Transverse colon (tissue), 4 donors: ENCODE measurements at regions of chr12 and their contacts with region 1.

Region 1: DNA sequence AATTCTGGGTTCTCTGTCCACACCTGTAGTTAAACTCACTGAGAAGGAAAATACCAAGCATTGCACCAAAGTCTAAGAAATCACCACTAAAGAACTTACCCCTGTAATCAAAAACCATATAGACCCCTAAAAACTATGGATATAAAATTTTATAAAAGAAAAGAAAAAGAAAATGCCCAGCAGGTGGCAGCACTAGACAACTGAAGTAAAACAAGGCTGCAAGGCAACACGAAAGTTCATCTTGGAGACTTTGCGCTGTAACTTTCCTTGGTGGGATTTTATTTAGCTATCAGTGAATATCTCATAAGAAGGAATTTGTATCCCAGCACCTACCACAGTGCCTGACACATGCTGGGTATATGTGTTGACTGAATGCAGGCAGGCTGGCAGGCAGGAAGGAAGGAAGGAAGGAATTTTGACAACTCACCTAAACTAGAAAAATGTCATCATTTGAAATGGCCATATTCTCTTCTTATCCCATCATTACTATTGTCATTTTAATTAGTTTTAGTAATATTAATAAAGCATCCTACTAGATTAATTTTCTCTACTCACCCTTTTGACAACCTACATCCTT is 68.2 kb upstream of the ETV6 start:
- DNase-seq: peak; percentile 75
- H3K4me3 ChIP-seq: no peak overlapping the region
- H3K27ac ChIP-seq: peak overlapping the region in 1 of 4 donors; percentile 68
- H3K4me1 ChIP-seq: peaks cover 0 to 16% (median 7%) of the 10 kb centered on the region in 4 donors
- H3K27me3 ChIP-seq: no peaks in the 10 kb centered on the region
- CTCF ChIP-seq: peak; percentile 60 to 86 (median 70)
- EP300 ChIP-seq: no peak
- POLR2A ChIP-seq: no peak

Region 2: GRCh38 chr12:11307143-11307542 is 274.1 kb before region 1 on chr12:
- in situ Hi-C with region 1: no loop called
- intact Hi-C with region 1: no loop called
- DNase-seq: no peak
- H3K4me3 ChIP-seq: no peak overlapping the region
- H3K27ac ChIP-seq: no peak overlapping the region
- H3K4me1 ChIP-seq: no peaks in the 10 kb centered on the region
- H3K27me3 ChIP-seq: no peaks in the 10 kb centered on the region
- CTCF ChIP-seq: no peak
- EP300 ChIP-seq: no peak
- POLR2A ChIP-seq: no peak

Region 3: GRCh38 chr12:11633968-11634367 is 52.7 kb after region 1 on chr12:
- in situ Hi-C with region 1: no loop called
- intact Hi-C with region 1: no loop called
- DNase-seq: no peak
- H3K4me3 ChIP-seq: no peak overlapping the region
- H3K27ac ChIP-seq: no peak overlapping the region
- H3K4me1 ChIP-seq: no peaks in the 10 kb centered on the region
- H3K27me3 ChIP-seq: no peaks in the 10 kb centered on the region
- CTCF ChIP-seq: no peak
- EP300 ChIP-seq: no peak
- POLR2A ChIP-seq: no peak

Region 4: GRCh38 chr12:11648831-11649702 is 67.8 kb after region 1 on chr12 and contains the start of gene ETV6:
- in situ Hi-C with region 1: loop called in 1 of 4 experiments (anchors 10 kb)
- intact Hi-C with region 1: no loop called
- DNase-seq: peak; percentile 81
- H3K4me3 ChIP-seq: peak within 1 kb of the TSS; percentile 77 to 97 (median 84)
- H3K27ac ChIP-seq: peak within 1 kb of the TSS; percentile 96 to 99 (median 98)
- H3K4me1 ChIP-seq: peaks cover 4 to 32% (median 17%) of the 10 kb centered on the region in 4 donors
- H3K27me3 ChIP-seq: no peaks in the 10 kb centered on the region
- CTCF ChIP-seq: no peak
- EP300 ChIP-seq: peak; percentile 89
- POLR2A ChIP-seq: peak; percentile 64
- total RNA-seq, gene ETV6: 19.9 to 47.9 (median 41.0) TPM

Region 5: GRCh38 chr12:12032851-12033588 is 451.8 kb after region 1 on chr12:
- in situ Hi-C with region 1: loop called (anchors 5 to 10 kb)
- intact Hi-C with region 1: loop called (anchors 1 kb)
- DNase-seq: peak; percentile 87
- H3K4me3 ChIP-seq: peak overlapping the region in 3 of 4 donors; percentile 31 to 56 (median 33)
- H3K27ac ChIP-seq: peak overlapping the region; percentile 85 to 86 (median 86)
- H3K4me1 ChIP-seq: peaks cover 0 to 20% (median 13%) of the 10 kb centered on the region in 4 donors
- H3K27me3 ChIP-seq: no peaks in the 10 kb centered on the region
- CTCF ChIP-seq: peak; percentile 78 to 96 (median 82)
- EP300 ChIP-seq: no peak
- POLR2A ChIP-seq: no peak

Region 6: DNA sequence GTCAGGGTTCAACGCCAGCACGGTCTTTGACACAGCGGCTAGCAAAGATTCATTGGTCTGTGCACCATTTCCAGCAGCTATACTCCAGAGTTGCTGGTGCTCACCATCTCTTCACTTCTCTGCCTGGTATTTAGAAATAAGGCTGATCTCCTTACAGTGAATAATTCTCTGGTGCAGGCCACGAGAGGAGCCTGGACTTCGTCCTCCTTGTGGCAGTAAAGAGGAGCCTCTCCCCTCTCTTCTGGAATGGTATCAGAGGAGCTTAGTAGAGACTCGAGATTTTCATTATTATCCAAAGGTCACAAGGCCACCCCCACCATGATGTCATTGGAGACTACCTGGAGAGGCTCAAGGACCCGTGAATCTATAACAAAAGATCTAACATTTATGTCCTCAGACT is 458.6 kb after region 1 on chr12:
- in situ Hi-C with region 1: loop called in 3 of 4 experiments (anchors 5 to 10 kb)
- intact Hi-C with region 1: no loop called
- DNase-seq: peak; percentile 55
- H3K4me3 ChIP-seq: no peak overlapping the region
- H3K27ac ChIP-seq: peak overlapping the region; percentile 21 to 59 (median 38)
- H3K4me1 ChIP-seq: peaks cover 0 to 20% (median 5%) of the 10 kb centered on the region in 4 donors
- H3K27me3 ChIP-seq: no peaks in the 10 kb centered on the region
- CTCF ChIP-seq: peak in 1 of 5 experiments; percentile 10
- EP300 ChIP-seq: no peak
- POLR2A ChIP-seq: no peak

Region 7: GRCh38 chr12:12334367-12335040 is 753.2 kb after region 1 on chr12:
- in situ Hi-C with region 1: loop called in 2 of 4 experiments (anchors 25 kb)
- intact Hi-C with region 1: no loop called
- DNase-seq: peak; percentile 64
- H3K4me3 ChIP-seq: no peak overlapping the region
- H3K27ac ChIP-seq: peak overlapping the region; percentile 52 to 78 (median 60)
- H3K4me1 ChIP-seq: peaks cover 9 to 38% (median 27%) of the 10 kb centered on the region in 4 donors
- H3K27me3 ChIP-seq: no peaks in the 10 kb centered on the region
- CTCF ChIP-seq: peak; percentile 82 to 93 (median 86)
- EP300 ChIP-seq: no peak
- POLR2A ChIP-seq: no peak